CD4-positive, alpha-beta memory T cell (primary cell): ENCODE measurements at regions of chr2 and their contacts with region 1.

Region 1: GRCh38 chr2:35973132-35973736 is 382.3 kb upstream of the CRIM1 start:
- DNase-seq: peak in 3 of 5 donors; percentile 5 to 13 (median 8)
- H3K4me3 ChIP-seq: no peak overlapping the region
- H3K4me3 Mint-ChIP-seq: no peak overlapping the region
- H3K27ac ChIP-seq: no peak overlapping the region
- H3K27ac Mint-ChIP-seq: no peak overlapping the region
- H3K4me1 ChIP-seq: peaks cover 16% of the 10 kb centered on the region
- H3K4me1 Mint-ChIP-seq: peaks cover 0 to 5% (median 2%) of the 10 kb centered on the region in 4 donors
- H3K27me3 ChIP-seq: no peaks in the 10 kb centered on the region
- H3K27me3 Mint-ChIP-seq: peaks cover 1 to 4% of the 10 kb centered on the region in 2 donors

Region 2: DNA sequence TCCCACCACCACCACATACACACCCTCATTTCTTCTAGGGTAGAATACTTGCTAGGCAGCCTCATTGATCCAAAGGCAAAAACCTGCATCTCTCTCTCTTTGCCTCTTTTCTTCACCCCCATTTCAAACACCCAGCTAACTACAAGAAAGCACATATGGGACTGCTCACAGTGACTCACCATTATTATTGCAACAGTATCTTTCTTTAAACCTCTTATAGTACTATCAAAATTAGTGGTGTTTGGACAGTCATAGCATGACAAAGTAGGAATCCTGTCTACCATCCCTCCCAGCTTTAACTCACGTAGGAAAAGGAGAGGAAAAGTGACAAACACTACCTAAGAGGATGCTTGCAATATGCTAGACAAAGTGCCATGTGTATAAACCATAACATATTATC is 40.2 kb before region 1 on chr2:
- CTCF ChIA-PET with region 1: no interaction called
- POLR2A ChIA-PET with region 1: no interaction called
- intact Hi-C with region 1: no loop called
- DNase-seq: no peak
- H3K4me3 ChIP-seq: no peak overlapping the region
- H3K4me3 Mint-ChIP-seq: no peak overlapping the region
- H3K27ac ChIP-seq: no peak overlapping the region
- H3K27ac Mint-ChIP-seq: no peak overlapping the region
- H3K4me1 ChIP-seq: no peaks in the 10 kb centered on the region
- H3K4me1 Mint-ChIP-seq: no peaks in the 10 kb centered on the region
- H3K27me3 ChIP-seq: no peaks in the 10 kb centered on the region
- H3K27me3 Mint-ChIP-seq: peaks cover 1 to 3% of the 10 kb centered on the region in 2 donors

Region 3: GRCh38 chr2:36246320-36246990 is 273.2 kb after region 1 on chr2:
- CTCF ChIA-PET with region 1: interaction called, 3 read pairs
- POLR2A ChIA-PET with region 1: no interaction called
- intact Hi-C with region 1: loop called (anchors 10 kb)
- DNase-seq: peak in 4 of 5 donors; percentile 74 to 81 (median 78)
- H3K4me3 ChIP-seq: no peak overlapping the region
- H3K4me3 Mint-ChIP-seq: peak overlapping the region in 7 of 8 donors; percentile 45 to 87 (median 74)
- H3K27ac ChIP-seq: no peak overlapping the region
- H3K27ac Mint-ChIP-seq: peak overlapping the region in 6 of 7 donors; percentile 68 to 92 (median 85)
- H3K4me1 ChIP-seq: peaks cover 61% of the 10 kb centered on the region
- H3K4me1 Mint-ChIP-seq: peaks cover 48 to 71% (median 59%) of the 10 kb centered on the region in 4 donors
- H3K27me3 ChIP-seq: no peaks in the 10 kb centered on the region
- H3K27me3 Mint-ChIP-seq: no peaks in the 10 kb centered on the region

Region 4: GRCh38 chr2:36322108-36322507 is 348.9 kb after region 1 on chr2:
- CTCF ChIA-PET with region 1: interaction called, 7 read pairs
- POLR2A ChIA-PET with region 1: no interaction called
- intact Hi-C with region 1: loop called (anchors 1 kb)
- DNase-seq: no peak
- H3K4me3 ChIP-seq: no peak overlapping the region
- H3K4me3 Mint-ChIP-seq: no peak overlapping the region
- H3K27ac ChIP-seq: no peak overlapping the region
- H3K27ac Mint-ChIP-seq: no peak overlapping the region
- H3K4me1 ChIP-seq: no peaks in the 10 kb centered on the region
- H3K4me1 Mint-ChIP-seq: no peaks in the 10 kb centered on the region
- H3K27me3 ChIP-seq: no peaks in the 10 kb centered on the region
- H3K27me3 Mint-ChIP-seq: peaks cover 4 to 7% of the 10 kb centered on the region in 2 donors

Region 5: DNA sequence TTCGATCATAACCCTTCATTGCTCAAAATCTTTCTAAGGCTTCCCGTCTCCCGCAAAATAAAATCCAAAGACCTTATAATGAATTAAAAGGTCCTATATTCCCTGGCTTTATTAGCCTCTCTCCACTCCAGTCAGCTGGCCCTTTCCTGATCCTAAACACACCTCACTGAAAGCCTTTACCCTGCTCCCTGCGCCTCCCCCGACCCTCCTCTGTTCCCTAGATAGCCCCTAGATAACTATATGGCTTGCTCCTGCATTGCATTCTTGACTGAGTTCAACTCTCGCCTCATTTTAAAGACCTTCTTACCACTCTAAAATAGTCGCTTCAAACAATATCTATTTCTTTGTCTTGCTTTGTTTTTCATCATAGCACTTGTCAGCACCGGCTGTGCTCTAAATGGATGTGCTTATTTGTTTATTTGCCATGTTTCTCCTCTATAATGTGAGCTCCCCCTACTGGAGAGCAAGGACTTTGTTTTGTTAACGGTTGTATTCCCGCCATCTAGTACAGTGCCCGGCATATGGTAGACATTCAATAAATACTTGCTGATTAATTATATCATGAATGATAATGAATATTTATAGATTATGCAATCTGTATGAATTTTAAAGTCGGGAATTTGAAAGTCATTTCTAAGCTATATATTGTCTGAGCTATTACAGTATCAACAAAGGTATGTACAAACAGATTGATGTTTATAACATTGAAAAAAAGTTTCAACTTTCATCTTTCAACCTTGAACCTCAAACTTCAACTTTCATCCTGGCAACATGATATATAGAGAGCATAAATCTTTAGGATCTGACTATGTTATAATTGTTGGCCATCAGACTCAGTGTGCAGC is 690.8 kb after region 1 on chr2:
- CTCF ChIA-PET with region 1: interaction called, 3 read pairs
- POLR2A ChIA-PET with region 1: no interaction called
- intact Hi-C with region 1: loop called (anchors 10 kb)
- DNase-seq: peak in 4 of 5 donors; percentile 27 to 46 (median 40)
- H3K4me3 ChIP-seq: no peak overlapping the region
- H3K4me3 Mint-ChIP-seq: no peak overlapping the region
- H3K27ac ChIP-seq: no peak overlapping the region
- H3K27ac Mint-ChIP-seq: no peak overlapping the region
- H3K4me1 ChIP-seq: no peaks in the 10 kb centered on the region
- H3K4me1 Mint-ChIP-seq: no peaks in the 10 kb centered on the region
- H3K27me3 ChIP-seq: no peaks in the 10 kb centered on the region
- H3K27me3 Mint-ChIP-seq: peaks cover 4 to 8% of the 10 kb centered on the region in 2 donors